SK-N-SH (cell line): ENCODE measurements at regions of chr2 and their contacts with region 1.

Region 1: GRCh38 chr2:120703330-120703994 is 32.2 kb upstream of the GLI2 start:
- DNase-seq: no peak
- H3K4me3 ChIP-seq: no peak overlapping the region
- H3K27ac ChIP-seq: no peak overlapping the region
- H3K4me1 ChIP-seq: peaks cover 0 to 18% of the 10 kb centered on the region in 2 experiments; a peak in 1 of 4 replicates
- H3K27me3 ChIP-seq: no peaks in the 10 kb centered on the region
- CTCF ChIP-seq: no peak
- EP300 ChIP-seq: no peak
- RAD21 ChIP-seq: no peak

Region 2: GRCh38 chr2:120576509-120577474 is 126.7 kb before region 1 on chr2:
- CTCF ChIA-PET with region 1: no interaction called
- POLR2A ChIA-PET with region 1: no interaction called
- DNase-seq: peak; percentile 71
- H3K4me3 ChIP-seq: no peak overlapping the region
- H3K27ac ChIP-seq: no peak overlapping the region
- H3K4me1 ChIP-seq: no peaks in the 10 kb centered on the region; a peak in 1 of 4 replicates
- H3K27me3 ChIP-seq: peaks cover 24% of the 10 kb centered on the region; the same call in 1 of the 2 replicates
- CTCF ChIP-seq: no peak
- EP300 ChIP-seq: no peak
- RAD21 ChIP-seq: no peak

Region 3: GRCh38 chr2:120680136-120680761 is 23.2 kb before region 1 on chr2:
- CTCF ChIA-PET with region 1: interaction called, 10 read pairs
- POLR2A ChIA-PET with region 1: no interaction called
- DNase-seq: peak; percentile 83
- H3K4me3 ChIP-seq: peak overlapping the region in 1 of 2 experiments; percentile 24; a peak in 1 of 4 replicates
- H3K27ac ChIP-seq: no peak overlapping the region
- H3K4me1 ChIP-seq: peaks cover 0 to 10% of the 10 kb centered on the region in 2 experiments; a peak in 2 of 4 replicates
- H3K27me3 ChIP-seq: peaks cover 14% of the 10 kb centered on the region; the same call in 1 of the 2 replicates
- CTCF ChIP-seq: peak; percentile 58
- EP300 ChIP-seq: no peak
- RAD21 ChIP-seq: peak; percentile 86

Region 4: DNA sequence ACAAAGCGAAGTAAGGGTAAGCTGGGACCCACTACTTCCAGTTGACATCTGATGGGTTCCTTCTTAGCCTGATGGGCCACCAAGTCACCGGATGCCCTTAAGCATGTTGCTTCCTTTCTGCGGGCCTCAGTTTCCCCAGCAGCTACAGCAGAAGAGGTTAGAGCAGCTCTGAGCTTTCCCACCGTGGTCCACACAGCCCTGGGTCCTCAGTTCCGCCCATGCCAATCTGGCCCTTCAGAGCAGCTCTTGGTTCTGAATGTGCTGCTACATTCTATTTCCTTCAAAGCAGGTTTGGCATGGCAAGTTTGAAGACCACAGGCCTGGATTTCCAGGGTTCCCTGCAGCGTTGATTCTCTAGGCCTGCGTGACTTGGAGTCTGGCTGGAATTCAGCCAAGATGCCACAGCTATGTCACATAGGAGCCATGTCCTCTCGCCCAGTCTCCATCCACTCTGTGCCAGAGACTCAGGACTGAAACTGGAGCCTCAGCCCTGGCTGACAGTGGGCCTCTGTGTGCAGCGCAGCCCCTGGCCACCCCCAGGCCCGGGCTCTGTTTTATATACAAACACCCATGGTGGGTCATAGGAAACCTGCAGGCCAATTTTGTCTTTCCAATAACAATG is 502.0 kb after region 1 on chr2:
- CTCF ChIA-PET with region 1: no interaction called
- POLR2A ChIA-PET with region 1: no interaction called
- DNase-seq: peak; percentile 48
- H3K4me3 ChIP-seq: no peak overlapping the region
- H3K27ac ChIP-seq: no peak overlapping the region
- H3K4me1 ChIP-seq: peaks cover 0 to 4% of the 10 kb centered on the region in 2 experiments; a peak in 1 of 4 replicates
- H3K27me3 ChIP-seq: peaks cover 11% of the 10 kb centered on the region; the same call in 1 of the 2 replicates
- CTCF ChIP-seq: no peak
- EP300 ChIP-seq: no peak
- RAD21 ChIP-seq: no peak